Activated CD4-positive, alpha-beta T cell treated with anti-CD3 and anti-CD28 coated beads for 36 hours (primary cell): ENCODE measurements at regions of chr2 and their contacts with region 1.

Region 1: DNA sequence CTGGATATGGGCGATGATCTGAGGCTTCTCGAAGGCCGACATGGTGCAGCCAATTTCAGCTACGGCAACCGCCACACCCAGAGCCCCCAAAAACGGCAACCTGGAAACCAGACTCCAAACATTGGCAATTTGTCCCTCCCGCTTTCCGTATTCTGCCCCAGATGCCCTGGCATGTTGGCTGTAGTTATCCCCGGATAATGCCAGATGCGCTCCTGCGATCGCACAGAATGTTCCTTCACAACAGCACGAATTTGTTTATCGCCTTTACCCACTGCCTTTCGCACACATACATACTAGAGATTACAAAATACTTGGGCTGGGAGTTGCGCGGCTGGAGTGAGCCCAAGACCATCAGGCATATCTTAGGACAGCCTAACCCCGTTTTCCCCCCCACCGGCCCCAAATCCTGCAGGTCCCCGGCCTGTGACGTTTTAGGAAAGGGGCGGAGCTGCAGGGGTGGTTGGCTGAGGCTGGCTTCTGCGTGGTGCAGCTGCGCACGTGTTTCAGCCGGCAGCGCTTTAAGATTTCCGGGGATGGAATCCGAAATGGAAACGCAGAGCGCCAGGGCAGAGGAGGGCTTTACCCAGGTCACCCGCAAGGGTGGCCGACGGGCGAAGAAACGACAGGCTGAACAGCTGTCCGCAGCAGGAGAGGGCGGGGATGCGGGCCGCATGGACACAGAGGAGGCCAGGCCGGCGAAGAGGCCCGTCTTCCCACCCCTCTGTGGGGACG is at the start of gene PNO1:
- DNase-seq: peak; percentile 98
- ATAC-seq: peak; percentile 93
- H3K4me3 Mint-ChIP-seq: peak within 1 kb of the TSS; percentile 97
- H3K27ac Mint-ChIP-seq: peak within 1 kb of the TSS; percentile 100
- H3K4me1 Mint-ChIP-seq: peaks cover 51% of the 10 kb centered on the region
- H3K27me3 Mint-ChIP-seq: no peaks in the 10 kb centered on the region
- total RNA-seq, gene PNO1: 15.7 to 20.5 TPM

Region 2: DNA sequence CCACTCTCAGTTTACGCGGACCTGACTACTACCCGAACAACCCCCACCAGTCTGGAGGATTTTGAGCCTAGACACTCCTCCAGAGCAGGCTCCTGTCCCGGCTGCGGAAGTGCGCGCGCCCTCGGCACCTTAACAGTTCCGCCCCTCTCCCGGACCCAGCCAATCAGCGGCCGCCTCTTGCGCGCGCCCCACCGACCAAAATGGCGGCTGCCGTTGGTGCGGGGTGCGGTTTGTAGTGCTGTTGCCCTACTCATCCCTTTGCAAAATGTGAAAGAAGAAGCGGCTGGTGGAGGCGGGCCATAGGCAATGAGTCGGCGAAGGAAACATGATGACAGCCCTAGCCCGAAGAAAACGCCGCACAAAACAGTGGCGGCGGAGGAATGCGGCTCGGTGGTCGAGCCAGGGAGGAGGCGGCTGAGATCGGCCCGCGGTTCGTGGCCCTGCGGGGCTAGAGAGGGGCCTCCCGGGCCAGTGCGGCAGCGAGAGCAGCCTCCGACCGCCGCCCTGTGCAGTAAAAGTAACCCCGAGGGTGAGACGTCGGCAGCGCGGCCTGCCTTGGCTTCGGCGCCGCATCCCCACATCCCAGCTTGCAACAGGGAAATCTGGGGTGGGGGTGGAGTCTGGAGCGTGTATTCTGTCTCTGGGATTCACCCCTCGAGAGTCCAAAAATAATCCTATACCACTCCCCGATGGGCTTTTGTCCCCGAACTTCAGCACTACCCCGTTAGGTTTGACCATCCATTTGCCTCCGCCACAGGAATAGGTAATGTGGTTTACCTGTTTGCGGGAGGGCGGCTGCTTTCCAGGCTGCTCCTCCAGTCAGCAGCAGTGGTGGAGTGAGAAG is 760.2 kb before region 1 on chr2 and contains the start of gene ETAA1:
- CTCF ChIA-PET with region 1: no interaction called
- POLR2A ChIA-PET with region 1: no interaction called
- intact Hi-C with region 1: loop called in 1 of 2 experiments (anchors 1 kb)
- DNase-seq: peak; percentile 96
- ATAC-seq: peak; percentile 100
- H3K4me3 Mint-ChIP-seq: peak within 1 kb of the TSS; percentile 98
- H3K27ac Mint-ChIP-seq: peak within 1 kb of the TSS; percentile 99
- H3K4me1 Mint-ChIP-seq: peaks cover 12% of the 10 kb centered on the region
- H3K27me3 Mint-ChIP-seq: no peaks in the 10 kb centered on the region
- total RNA-seq, gene ETAA1: 13.7 to 17.1 TPM

Region 3: DNA sequence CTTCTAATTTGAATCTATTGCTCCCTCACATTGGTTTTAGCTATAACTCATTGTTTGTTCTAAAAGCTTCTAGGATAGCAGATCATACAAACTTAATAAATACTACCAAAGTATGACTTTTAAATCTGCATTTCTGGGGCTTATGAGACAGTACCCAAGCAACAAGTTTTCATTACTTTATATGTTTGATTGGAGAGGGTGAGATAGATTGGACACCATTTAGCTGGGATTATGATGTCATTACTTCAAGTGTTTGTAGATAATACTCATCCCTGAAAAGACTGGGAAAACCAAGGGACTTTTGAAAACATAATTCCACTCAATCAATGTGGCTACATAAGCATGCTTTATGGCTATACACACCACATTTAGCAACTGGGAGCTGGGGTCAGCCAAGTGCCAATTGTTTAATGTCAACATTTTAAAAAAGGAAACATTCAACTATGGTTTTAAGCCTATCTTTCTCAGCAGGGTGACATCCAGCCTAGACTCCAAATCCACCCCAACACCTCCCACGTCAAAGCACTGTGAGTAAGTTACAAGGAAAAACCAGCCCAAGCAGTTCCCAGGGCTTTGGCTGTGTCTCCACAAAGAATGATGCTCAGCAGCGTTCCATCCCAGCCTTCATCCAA is 640.6 kb before region 1 on chr2:
- CTCF ChIA-PET with region 1: no interaction called
- POLR2A ChIA-PET with region 1: no interaction called
- intact Hi-C with region 1: no loop called
- DNase-seq: no peak
- ATAC-seq: no peak
- H3K4me3 Mint-ChIP-seq: no peak overlapping the region
- H3K27ac Mint-ChIP-seq: no peak overlapping the region
- H3K4me1 Mint-ChIP-seq: no peaks in the 10 kb centered on the region
- H3K27me3 Mint-ChIP-seq: peaks cover 4% of the 10 kb centered on the region

Region 4: GRCh38 chr2:68062680-68063387 is 94.7 kb before region 1 on chr2 and contains the start of gene C1D:
- CTCF ChIA-PET with region 1: interaction called, 3 read pairs
- POLR2A ChIA-PET with region 1: no interaction called
- intact Hi-C with region 1: loop called (anchors 1 to 2 kb)
- DNase-seq: peak; percentile 96
- ATAC-seq: peak; percentile 92
- H3K4me3 Mint-ChIP-seq: peak within 1 kb of the TSS; percentile 89
- H3K27ac Mint-ChIP-seq: peak within 1 kb of the TSS; percentile 95
- H3K4me1 Mint-ChIP-seq: peaks cover 28% of the 10 kb centered on the region
- H3K27me3 Mint-ChIP-seq: no peaks in the 10 kb centered on the region
- total RNA-seq, gene C1D: 11.3 to 21.4 TPM

Region 5: DNA sequence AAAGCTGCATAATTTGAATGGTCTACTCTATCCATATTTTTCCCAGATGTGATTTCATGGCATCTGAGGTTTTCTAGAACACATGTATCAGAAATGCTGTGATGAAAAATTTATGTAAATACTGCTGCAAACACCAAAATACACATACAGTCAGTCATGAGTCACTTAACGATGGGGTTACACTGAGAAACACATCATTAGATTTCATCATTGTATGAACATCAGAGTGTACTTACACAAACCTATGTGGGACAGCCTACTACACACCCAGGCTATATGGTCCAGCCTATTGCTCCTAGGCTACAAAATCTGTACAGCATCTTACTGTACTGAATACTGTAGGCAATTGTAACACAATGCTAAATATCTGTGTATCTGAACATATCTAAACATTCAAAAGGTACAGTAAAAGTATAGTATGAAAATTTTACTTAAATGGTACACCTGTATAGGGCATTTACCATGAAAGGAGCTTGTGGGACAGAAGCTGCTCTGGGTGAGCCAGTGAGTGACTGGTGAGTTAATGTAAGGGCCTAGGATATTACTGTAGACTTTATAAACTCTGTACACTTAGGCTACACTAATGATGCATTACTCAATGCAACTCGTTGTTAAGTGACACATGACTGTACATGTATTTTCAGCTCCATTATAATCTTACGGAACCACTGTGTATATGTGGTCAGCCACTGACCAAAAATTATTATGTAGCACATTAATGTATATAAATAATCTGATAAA is 33.6 kb after region 1 on chr2:
- CTCF ChIA-PET with region 1: interaction called, 4 read pairs
- POLR2A ChIA-PET with region 1: interaction called, 3 read pairs
- intact Hi-C with region 1: loop called in 1 of 2 experiments (anchors 5 kb)
- DNase-seq: no peak
- ATAC-seq: peak; percentile 89
- H3K4me3 Mint-ChIP-seq: no peak overlapping the region
- H3K27ac Mint-ChIP-seq: peak overlapping the region; percentile 76
- H3K4me1 Mint-ChIP-seq: peaks cover 61% of the 10 kb centered on the region
- H3K27me3 Mint-ChIP-seq: no peaks in the 10 kb centered on the region